Panc1 (cell line): ENCODE measurements at regions of chr1 and their contacts with region 1.

Region 1: DNA sequence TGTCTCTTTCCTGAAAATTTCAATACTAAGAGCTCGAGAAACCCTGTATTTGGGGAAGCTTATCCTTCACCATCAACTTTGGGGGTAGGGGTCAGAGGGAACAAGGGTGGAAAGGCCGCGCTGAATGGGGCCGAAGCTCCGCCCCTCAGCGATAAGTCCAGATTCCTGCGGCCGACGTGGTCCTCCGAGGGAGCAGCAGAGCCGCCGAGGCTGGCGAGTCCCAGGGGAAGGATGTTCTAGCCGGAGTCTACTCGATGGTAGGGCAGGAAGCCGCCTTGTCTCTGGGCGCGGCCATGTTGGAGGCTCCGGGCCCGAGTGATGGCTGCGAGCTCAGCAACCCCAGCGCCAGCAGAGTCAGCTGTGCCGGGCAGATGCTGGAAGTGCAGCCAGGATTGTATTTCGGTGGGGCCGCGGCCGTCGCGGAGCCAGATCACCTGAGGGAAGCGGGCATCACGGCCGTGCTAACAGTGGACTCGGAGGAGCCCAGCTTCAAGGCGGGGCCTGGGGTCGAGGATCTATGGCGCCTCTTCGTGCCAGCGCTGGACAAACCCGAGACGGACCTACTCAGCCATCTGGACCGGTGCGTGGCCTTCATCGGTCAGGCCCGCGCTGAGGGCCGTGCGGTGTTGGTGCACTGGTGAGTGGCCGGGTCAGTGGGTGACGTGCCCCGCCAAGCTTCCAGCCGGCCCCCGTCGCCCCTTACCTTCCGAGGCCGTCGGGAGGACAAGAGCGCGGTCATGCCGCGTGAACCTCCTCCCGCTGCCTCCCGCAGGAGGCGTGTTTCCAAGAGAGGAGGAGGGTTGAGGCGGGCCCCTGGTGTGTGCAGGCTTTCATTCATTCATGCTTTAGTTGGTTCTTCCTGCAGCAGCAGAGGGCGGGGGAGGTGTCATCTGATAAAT is at the start of gene DUSP12:
- DNase-seq: no peak
- ATAC-seq: peak; percentile 98
- H3K4me3 ChIP-seq: peak within 1 kb of the TSS; percentile 74 to 90
- H3K27ac ChIP-seq: peak within 1 kb of the TSS; percentile 86
- H3K4me1 ChIP-seq: peaks cover 8% of the 10 kb centered on the region
- H3K27me3 ChIP-seq: no peaks in the 10 kb centered on the region
- CTCF ChIP-seq: peak; percentile 54
- total RNA-seq, gene DUSP12: 22.0 TPM

Region 2: DNA sequence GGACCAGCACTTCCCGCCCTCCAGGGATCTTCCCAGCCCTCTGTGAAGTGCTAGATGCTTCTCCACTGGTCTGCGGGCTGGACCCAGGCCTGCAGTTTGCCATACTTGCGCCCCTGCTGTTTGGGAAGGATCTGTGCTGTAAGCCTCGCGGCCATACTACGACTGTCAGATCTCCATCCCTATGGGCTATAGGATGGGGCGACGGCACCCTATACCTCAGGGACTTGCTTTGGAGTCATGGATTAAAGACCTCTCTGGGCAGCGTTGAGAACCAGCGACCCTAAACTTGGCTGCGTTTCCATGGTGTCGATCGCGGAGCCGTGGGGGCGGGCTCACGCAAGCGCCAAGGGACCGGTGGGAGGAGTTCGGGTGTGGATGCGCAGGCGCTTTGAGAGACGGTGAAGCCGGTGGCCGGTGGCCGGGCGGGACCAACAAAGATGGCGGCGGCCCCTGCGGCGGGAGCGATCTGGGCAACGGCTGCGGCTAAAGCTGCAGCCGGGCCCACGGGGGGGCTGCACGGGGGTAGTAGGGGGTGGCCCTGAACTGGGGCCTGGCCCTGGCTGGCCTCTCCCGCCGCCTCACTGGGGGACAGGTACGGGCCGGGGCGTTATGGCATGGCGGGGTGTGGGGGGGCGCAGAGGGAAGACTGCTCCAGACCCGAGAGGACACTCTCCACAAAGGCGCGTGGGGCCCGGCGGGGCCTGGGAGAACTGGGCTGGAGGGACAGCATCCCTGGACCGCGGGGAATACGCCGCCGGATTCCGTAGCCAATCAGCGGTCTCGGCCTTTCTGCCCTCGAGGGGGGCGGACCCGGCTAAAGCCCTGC is 590.5 kb before region 1 on chr1 and contains the start of gene USP21:
- CTCF ChIA-PET with region 1: no interaction called
- POLR2A ChIA-PET with region 1: no interaction called
- in situ Hi-C with region 1: no loop called
- intact Hi-C with region 1: no loop called
- DNase-seq: peak; percentile 69
- ATAC-seq: peak; percentile 96
- H3K4me3 ChIP-seq: peak within 1 kb of the TSS; percentile 82 to 90
- H3K27ac ChIP-seq: peak within 1 kb of the TSS; percentile 91
- H3K4me1 ChIP-seq: peaks cover 22% of the 10 kb centered on the region
- H3K27me3 ChIP-seq: no peaks in the 10 kb centered on the region
- CTCF ChIP-seq: peak; percentile 47; the same call in 1 of the 2 replicates
- total RNA-seq, gene USP21: 41.9 TPM

Region 3: GRCh38 chr1:161314201-161314981 is 435.4 kb before region 1 on chr1 and contains the start of gene SDHC:
- CTCF ChIA-PET with region 1: no interaction called
- POLR2A ChIA-PET with region 1: no interaction called
- in situ Hi-C with region 1: no loop called
- intact Hi-C with region 1: no loop called
- DNase-seq: peak; percentile 61
- ATAC-seq: peak; percentile 98
- H3K4me3 ChIP-seq: peak within 1 kb of the TSS; percentile 92 to 94
- H3K27ac ChIP-seq: peak within 1 kb of the TSS; percentile 97
- H3K4me1 ChIP-seq: peaks cover 8% of the 10 kb centered on the region
- H3K27me3 ChIP-seq: no peaks in the 10 kb centered on the region
- CTCF ChIP-seq: no peak
- total RNA-seq, gene SDHC: 221 TPM

Region 4: GRCh38 chr1:161486806-161487741 is 262.7 kb before region 1 on chr1:
- CTCF ChIA-PET with region 1: interaction called, 7 read pairs
- POLR2A ChIA-PET with region 1: no interaction called
- in situ Hi-C with region 1: no loop called
- intact Hi-C with region 1: loop called (anchors 10 kb)
- DNase-seq: peak; percentile 38
- ATAC-seq: peak; percentile 85
- H3K4me3 ChIP-seq: no peak overlapping the region
- H3K27ac ChIP-seq: no peak overlapping the region
- H3K4me1 ChIP-seq: no peaks in the 10 kb centered on the region; the same call in 1 of the 2 replicates
- H3K27me3 ChIP-seq: peaks cover 22% of the 10 kb centered on the region
- CTCF ChIP-seq: peak; percentile 88

Region 5: DNA sequence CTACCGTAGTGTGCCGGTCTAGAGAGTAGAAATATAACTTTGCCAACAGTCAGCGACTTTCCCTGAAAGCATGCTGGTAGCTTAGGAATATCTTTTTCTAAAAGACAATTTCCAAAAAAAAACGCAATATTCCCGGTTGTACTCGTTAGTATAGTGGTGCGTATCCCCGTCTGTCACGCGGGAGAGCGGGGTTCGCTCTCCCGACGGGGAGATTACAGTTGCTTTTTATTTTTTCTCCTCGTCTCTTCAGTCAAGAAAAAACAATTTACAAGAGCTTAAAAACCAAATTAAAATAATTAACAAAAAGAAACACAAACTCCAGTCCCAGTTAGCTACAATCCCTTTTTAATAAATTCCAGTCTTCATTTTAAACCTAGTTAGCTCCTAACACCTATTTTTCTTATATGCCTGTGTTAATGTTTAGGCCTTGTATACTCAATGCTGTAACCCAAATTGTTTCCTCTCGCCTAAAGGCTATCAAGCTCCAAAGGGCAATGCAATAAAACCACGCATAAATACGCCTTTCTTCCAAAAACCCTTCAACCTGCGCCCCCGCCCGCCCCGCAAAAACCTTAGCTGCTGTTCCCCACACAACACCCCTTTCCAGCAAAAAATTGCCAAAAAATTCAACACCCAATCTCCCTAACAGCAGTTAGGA is 217.6 kb before region 1 on chr1:
- CTCF ChIA-PET with region 1: no interaction called
- POLR2A ChIA-PET with region 1: interaction called, 4 read pairs
- in situ Hi-C with region 1: loop called (anchors 25 kb)
- intact Hi-C with region 1: loop called (anchors 10 kb)
- DNase-seq: no peak
- ATAC-seq: no peak
- H3K4me3 ChIP-seq: peak overlapping the region; percentile 62 to 71
- H3K27ac ChIP-seq: peak overlapping the region; percentile 86
- H3K4me1 ChIP-seq: peaks cover 13% of the 10 kb centered on the region
- H3K27me3 ChIP-seq: no peaks in the 10 kb centered on the region
- CTCF ChIP-seq: no peak

Region 6: DNA sequence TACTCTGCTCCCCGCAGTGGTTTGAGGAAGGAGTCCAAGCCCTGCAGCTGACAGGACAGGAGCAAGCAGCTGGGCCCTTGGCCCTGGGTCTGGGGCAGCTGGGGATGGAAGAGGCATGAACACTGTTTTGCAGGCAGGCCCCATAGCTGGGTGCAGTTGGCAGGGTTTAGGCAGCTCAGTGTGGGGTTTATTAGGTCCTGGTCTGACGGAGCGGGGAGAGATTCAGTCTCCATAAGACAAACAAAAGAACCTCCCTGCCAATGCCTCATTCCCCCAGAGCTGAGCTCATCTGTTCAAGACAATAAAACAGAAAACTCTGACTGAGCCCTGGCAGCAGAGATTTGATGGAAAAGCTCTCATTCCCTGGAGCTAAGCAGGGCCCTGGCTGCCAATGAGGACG is 236.6 kb after region 1 on chr1:
- CTCF ChIA-PET with region 1: no interaction called
- POLR2A ChIA-PET with region 1: no interaction called
- in situ Hi-C with region 1: no loop called
- intact Hi-C with region 1: no loop called
- DNase-seq: no peak
- ATAC-seq: peak; percentile 22; the same call in 1 of the 2 replicates
- H3K4me3 ChIP-seq: no peak overlapping the region
- H3K27ac ChIP-seq: no peak overlapping the region
- H3K4me1 ChIP-seq: no peaks in the 10 kb centered on the region
- H3K27me3 ChIP-seq: peaks cover 6% of the 10 kb centered on the region; the same call in 1 of the 2 replicates
- CTCF ChIP-seq: no peak